AG04450 (cell line): ENCODE measurements at regions of chr3 and their contacts with region 1.

Region 1: DNA sequence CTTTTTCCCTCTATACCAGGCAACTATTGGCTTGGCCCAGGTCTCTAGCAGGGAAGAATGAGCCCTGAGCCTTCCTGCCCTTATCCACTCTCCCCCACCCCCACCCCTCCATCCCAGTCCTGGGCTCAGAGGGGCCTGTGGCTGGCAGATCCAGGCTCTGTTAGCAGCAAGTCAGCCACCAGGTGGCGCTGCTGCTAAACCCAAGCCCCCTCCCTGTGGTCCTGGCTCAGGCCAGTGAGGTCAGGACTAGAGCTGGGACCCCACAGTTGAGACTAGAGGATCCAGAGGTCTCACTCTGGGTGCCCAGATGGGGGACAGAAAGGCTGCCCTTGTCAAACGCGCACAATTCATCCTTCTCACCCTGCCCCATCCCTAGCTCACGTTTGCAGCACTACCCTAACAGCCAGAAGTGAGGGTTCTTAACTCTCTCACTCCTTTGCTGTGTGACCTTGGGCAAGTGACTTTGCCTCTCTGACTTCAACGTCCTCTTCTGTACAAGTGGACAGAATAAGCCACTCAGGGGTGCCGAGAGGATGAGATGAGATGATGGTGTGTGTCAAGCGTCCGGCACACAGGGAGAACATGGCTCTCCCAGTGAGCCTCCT is 46.8 kb upstream of the SLC6A1 start:
- DNase-seq: peak; percentile 6
- H3K4me3 ChIP-seq: no peak overlapping the region
- H3K27ac ChIP-seq: no peak overlapping the region
- H3K27me3 ChIP-seq: peaks cover 5% of the 10 kb centered on the region
- CTCF ChIP-seq: peak; percentile 78

Region 2: GRCh38 chr3:10855871-10856662 is 89.7 kb before region 1 on chr3:
- CTCF ChIA-PET with region 1: no interaction called
- POLR2A ChIA-PET with region 1: no interaction called
- DNase-seq: no peak
- H3K4me3 ChIP-seq: no peak overlapping the region
- H3K27ac ChIP-seq: no peak overlapping the region
- H3K27me3 ChIP-seq: no peaks in the 10 kb centered on the region
- CTCF ChIP-seq: peak; percentile 36

Region 3: GRCh38 chr3:10983219-10983916 is 37.6 kb after region 1 on chr3:
- CTCF ChIA-PET with region 1: interaction called, 10 read pairs
- POLR2A ChIA-PET with region 1: no interaction called
- DNase-seq: no peak
- H3K4me3 ChIP-seq: no peak overlapping the region
- H3K27ac ChIP-seq: no peak overlapping the region
- H3K27me3 ChIP-seq: peaks cover 16% of the 10 kb centered on the region
- CTCF ChIP-seq: peak; percentile 87